Dorsolateral prefrontal cortex (tissue), 120 donors: ENCODE measurements at regions of chr4 and their contacts with region 1.

Region 1: GRCh38 chr4:132958457-132959263 is 190.4 kb upstream of the PCDH10 start:
- DNase-seq: no peak
- H3K4me3 ChIP-seq: no peak overlapping the region
- H3K27ac ChIP-seq: peak overlapping the region in 56 of 59 donors; percentile 0 to 98 (median 90)
- H3K27me3 ChIP-seq: no peaks in the 10 kb centered on the region
- CTCF ChIP-seq: no peak

Region 2: DNA sequence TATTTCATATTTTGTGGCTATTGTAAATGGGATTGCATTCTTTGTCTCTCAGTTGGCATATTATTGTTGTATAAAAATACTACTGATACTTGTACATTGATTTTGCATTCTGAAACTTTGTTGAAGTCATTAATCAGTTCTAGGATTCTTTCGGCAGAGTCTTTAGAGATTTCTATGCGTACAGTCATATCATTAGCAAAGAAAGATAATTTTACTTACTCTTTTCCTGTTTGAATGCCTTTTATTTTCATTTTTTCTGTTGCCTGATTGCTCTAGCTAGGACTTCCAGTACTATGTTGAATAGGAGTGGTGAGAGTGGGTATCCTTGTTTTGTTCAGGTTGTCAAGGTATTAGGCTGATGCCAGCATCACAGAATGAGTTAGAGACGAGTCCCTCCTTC is 531.5 kb before region 1 on chr4:
- intact Hi-C with region 1: no loop called
- DNase-seq: no peak
- H3K4me3 ChIP-seq: no peak overlapping the region
- H3K27ac ChIP-seq: no peak overlapping the region
- H3K27me3 ChIP-seq: no peaks in the 10 kb centered on the region
- CTCF ChIP-seq: no peak

Region 3: DNA sequence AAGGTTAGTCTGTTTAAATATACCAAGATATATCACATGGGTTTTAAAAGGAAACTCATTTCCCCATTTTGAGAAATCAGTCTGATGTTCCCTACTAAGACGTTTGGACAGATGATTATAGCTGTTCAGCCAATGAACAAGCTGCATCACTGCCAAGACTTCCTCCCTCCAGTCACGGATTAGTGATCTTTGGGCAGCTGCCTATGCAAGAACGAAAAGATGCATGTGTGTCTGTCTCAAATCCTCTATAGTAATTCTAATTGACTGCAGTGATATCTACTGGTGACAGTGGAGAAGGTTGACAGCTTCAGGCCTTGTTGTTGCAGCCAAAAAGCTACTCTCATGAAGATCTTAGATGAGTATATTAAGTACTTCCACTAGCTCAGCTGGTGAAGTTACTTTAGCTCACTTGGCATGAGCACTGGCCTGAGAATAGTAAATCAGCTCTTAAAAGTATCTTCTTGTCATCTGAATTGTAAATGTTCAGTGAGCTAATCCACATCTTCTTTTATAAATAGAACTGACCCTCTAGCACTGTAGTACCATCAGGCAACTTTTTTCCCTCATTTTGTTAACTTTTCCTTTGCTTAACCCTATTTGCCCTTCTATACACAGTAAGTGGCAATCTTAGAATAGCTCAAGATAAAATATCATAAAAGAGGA is 55.9 kb after region 1 on chr4:
- intact Hi-C with region 1: no loop called
- DNase-seq: no peak
- H3K4me3 ChIP-seq: no peak overlapping the region
- H3K27ac ChIP-seq: peak overlapping the region in 22 of 59 donors; percentile 3 to 68 (median 41)
- H3K27me3 ChIP-seq: no peaks in the 10 kb centered on the region
- CTCF ChIP-seq: peak in 4 of 56 donors; percentile 9 to 30 (median 15)

Region 4: GRCh38 chr4:133148690-133149363 is 190.2 kb after region 1 on chr4 and contains the start of gene PCDH10:
- intact Hi-C with region 1: loop called (anchors 5 kb)
- DNase-seq: peak; percentile 63 to 100 (median 99)
- H3K4me3 ChIP-seq: peak within 1 kb of the TSS; percentile 65 to 97 (median 80)
- H3K27ac ChIP-seq: peak within 1 kb of the TSS; percentile 86 to 98 (median 95)
- H3K27me3 ChIP-seq: peaks cover 0 to 3% (median 0%) of the 10 kb centered on the region in 45 donors
- CTCF ChIP-seq: peak in 22 of 56 donors; percentile 3 to 34 (median 16)
- total RNA-seq, gene PCDH10: 55.4 to 124 (median 86.6) TPM